ENCODE measurements at regions of chr3 and their contacts with region 1.

Region 1: GRCh38 chr3:113953677-113954076 is 5.9 kb downstream of the ZDHHC23 start:
- DNase-seq: no peak
- ATAC-seq: no peak
- H3K4me3 ChIP-seq: no peak overlapping the region
- H3K27ac ChIP-seq: no peak overlapping the region
- H3K4me1 ChIP-seq: peaks cover 0 to 5% (median under 1%) of the 10 kb centered on the region in 9 donors
- H3K27me3 ChIP-seq: peaks cover 0 to under 1% (median 0%) of the 10 kb centered on the region in 7 donors
- CTCF ChIP-seq: no peak

Region 2: GRCh38 chr3:113495035-113495434 is 458.6 kb before region 1 on chr3:
- intact Hi-C with region 1: no loop called
- DNase-seq: peak in 1 of 2 donors; percentile 17
- ATAC-seq: no peak
- H3K4me3 ChIP-seq: no peak overlapping the region
- H3K27ac ChIP-seq: no peak overlapping the region
- H3K4me1 ChIP-seq: no peaks in the 10 kb centered on the region
- H3K27me3 ChIP-seq: no peaks in the 10 kb centered on the region
- CTCF ChIP-seq: peak; percentile 14 to 67 (median 52)

Region 3: DNA sequence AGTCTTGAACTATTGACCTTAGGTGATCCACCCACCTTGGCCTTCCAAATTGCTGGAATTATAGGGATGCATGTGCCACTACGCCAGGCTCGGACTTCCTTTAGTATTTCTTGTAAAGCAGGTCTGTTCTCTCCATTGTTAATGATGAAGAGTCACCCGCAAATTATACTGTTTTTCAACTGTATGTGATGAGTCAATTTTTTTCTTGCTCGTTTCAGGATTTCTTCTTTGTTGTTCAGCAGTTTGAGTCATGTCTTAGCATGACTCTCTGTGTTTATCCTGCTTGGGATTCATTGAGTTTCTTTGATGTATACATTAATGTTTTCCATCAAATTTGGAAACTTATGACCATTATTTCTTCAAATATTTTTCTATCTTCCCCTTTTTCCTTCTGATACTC is 86.2 kb before region 1 on chr3:
- intact Hi-C with region 1: no loop called
- DNase-seq: no peak
- ATAC-seq: no peak
- H3K4me3 ChIP-seq: no peak overlapping the region
- H3K27ac ChIP-seq: no peak overlapping the region
- H3K4me1 ChIP-seq: no peaks in the 10 kb centered on the region
- H3K27me3 ChIP-seq: no peaks in the 10 kb centered on the region
- CTCF ChIP-seq: no peak

Region 4: GRCh38 chr3:114144909-114145647 is 191.4 kb after region 1 on chr3:
- intact Hi-C with region 1: loop called in 1 of 10 experiments (anchors 10 kb)
- DNase-seq: no peak
- ATAC-seq: peak in 4 of 8 donors; percentile 29 to 79 (median 50)
- H3K4me3 ChIP-seq: no peak overlapping the region
- H3K27ac ChIP-seq: peak overlapping the region in 1 of 10 donors; percentile 42
- H3K4me1 ChIP-seq: peaks cover 0 to 9% (median 0%) of the 10 kb centered on the region in 9 donors
- H3K27me3 ChIP-seq: no peaks in the 10 kb centered on the region
- CTCF ChIP-seq: no peak

Measured in heart right ventricle (tissue), 16 donors.